Caco-2 (cell line): ENCODE measurements at regions of chr7 and their contacts with region 1.

Region 1: DNA sequence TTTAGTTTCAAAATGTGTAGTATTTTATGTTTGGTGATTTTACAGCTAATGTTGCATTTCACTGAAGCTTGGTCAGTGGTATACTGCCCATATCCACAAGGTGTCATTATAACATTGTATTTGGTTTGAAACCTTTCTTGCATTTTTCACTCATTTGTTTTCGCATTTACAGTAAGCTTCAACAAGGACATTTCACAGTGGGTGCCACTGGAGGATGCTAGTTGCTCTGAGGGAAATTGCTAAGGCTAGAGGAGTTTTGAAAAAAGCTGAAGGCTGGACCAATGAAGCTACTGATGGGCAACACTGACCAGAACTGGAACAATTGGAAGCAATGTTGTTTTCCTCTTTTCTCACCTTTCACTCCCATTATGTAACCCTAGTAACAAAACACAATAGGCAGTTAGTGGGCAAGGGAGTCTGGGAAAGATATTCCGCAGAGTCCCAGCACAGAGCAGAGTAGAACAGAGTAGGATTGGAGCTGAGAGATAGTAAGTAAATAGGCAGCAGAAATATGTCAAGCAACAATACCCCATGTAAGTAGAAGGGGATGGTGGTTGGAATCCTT is 23.6 kb upstream of the SRI start:
- DNase-seq: peak in 1 of 2 experiments; percentile 36
- H3K4me3 ChIP-seq: no peak overlapping the region
- H3K4me3 Mint-ChIP-seq: no peak overlapping the region
- H3K27ac Mint-ChIP-seq: no peak overlapping the region
- H3K4me1 ChIP-seq: no peaks in the 10 kb centered on the region
- H3K4me1 Mint-ChIP-seq: no peaks in the 10 kb centered on the region
- H3K27me3 ChIP-seq: no peaks in the 10 kb centered on the region
- H3K27me3 Mint-ChIP-seq: peaks cover 5% of the 10 kb centered on the region
- CTCF ChIP-seq: peak; percentile 68 to 81

Region 2: GRCh38 chr7:88306590-88307048 is 63.2 kb after region 1 on chr7 and contains the start of gene STEAP4:
- CTCF ChIA-PET with region 1: no interaction called
- POLR2A ChIA-PET with region 1: no interaction called
- intact Hi-C with region 1: loop called (anchors 2 kb)
- DNase-seq: peak; percentile 62 to 65
- H3K4me3 ChIP-seq: peak within 1 kb of the TSS; percentile 34
- H3K4me3 Mint-ChIP-seq: peak within 1 kb of the TSS; percentile 84
- H3K27ac Mint-ChIP-seq: no peak within 1 kb of the TSS
- H3K4me1 ChIP-seq: peaks cover 12% of the 10 kb centered on the region; the same call in 1 of the 2 replicates
- H3K4me1 Mint-ChIP-seq: no peaks in the 10 kb centered on the region
- H3K27me3 ChIP-seq: no peaks in the 10 kb centered on the region
- H3K27me3 Mint-ChIP-seq: peaks cover 2% of the 10 kb centered on the region
- CTCF ChIP-seq: no peak
- total RNA-seq, gene STEAP4: 0.05 TPM in 1 of 2 replicates, not detected in the other

Region 3: GRCh38 chr7:88357781-88358525 is 114.5 kb after region 1 on chr7:
- CTCF ChIA-PET with region 1: interaction called, 24 read pairs
- POLR2A ChIA-PET with region 1: no interaction called
- intact Hi-C with region 1: loop called (anchors 1 kb)
- DNase-seq: peak in 1 of 2 experiments; percentile 32
- H3K4me3 ChIP-seq: no peak overlapping the region
- H3K4me3 Mint-ChIP-seq: peak overlapping the region; percentile 15
- H3K27ac Mint-ChIP-seq: no peak overlapping the region
- H3K4me1 ChIP-seq: peaks cover 14% of the 10 kb centered on the region
- H3K4me1 Mint-ChIP-seq: peaks cover 11% of the 10 kb centered on the region
- H3K27me3 ChIP-seq: no peaks in the 10 kb centered on the region; the same call in 1 of the 2 replicates
- H3K27me3 Mint-ChIP-seq: peaks cover 5% of the 10 kb centered on the region
- CTCF ChIP-seq: peak; percentile 56 to 71

Region 4: DNA sequence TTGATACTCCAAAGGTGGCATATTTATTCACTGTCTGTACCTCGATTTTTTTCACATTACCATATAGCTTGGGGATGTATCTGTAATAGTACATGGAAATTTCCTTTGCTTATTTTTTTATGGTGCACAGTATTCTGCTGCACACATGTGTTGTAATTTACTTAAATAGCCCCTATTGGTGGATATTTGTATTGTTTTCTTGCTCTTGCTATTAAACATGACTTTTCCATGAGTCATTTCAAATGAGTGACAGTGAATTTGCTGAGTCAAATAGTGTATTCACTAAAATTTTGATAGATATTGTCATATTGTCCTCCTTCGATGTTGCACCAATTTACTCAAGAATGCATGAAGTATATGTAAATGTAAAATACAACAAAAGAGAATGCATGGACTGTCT is 186.0 kb after region 1 on chr7:
- CTCF ChIA-PET with region 1: no interaction called
- POLR2A ChIA-PET with region 1: no interaction called
- intact Hi-C with region 1: no loop called
- DNase-seq: no peak
- H3K4me3 ChIP-seq: no peak overlapping the region
- H3K4me3 Mint-ChIP-seq: no peak overlapping the region
- H3K27ac Mint-ChIP-seq: no peak overlapping the region
- H3K4me1 ChIP-seq: no peaks in the 10 kb centered on the region
- H3K4me1 Mint-ChIP-seq: no peaks in the 10 kb centered on the region
- H3K27me3 ChIP-seq: no peaks in the 10 kb centered on the region
- H3K27me3 Mint-ChIP-seq: peaks cover 5% of the 10 kb centered on the region
- CTCF ChIP-seq: no peak

Region 5: DNA sequence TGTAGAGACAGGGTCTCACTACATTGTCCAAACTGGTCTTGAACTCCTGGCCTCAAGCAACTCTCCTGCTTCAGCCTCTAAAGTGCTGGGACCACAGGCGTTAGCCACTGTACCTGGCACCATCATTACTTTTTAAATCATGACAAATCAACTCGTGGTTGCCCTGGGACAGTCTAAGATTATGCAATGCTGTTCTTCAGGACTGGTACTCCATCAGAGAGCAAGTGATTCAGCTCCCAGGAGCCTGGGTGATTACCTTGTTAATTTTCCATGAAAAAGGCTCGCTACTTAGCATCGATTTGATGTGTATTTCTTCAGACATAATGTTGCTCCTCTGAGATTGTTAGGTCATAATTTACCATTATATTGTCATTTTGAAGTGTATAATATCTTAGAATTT is 222.2 kb after region 1 on chr7:
- CTCF ChIA-PET with region 1: no interaction called
- POLR2A ChIA-PET with region 1: no interaction called
- intact Hi-C with region 1: loop called (anchors 10 kb)
- DNase-seq: no peak
- H3K4me3 ChIP-seq: no peak overlapping the region
- H3K4me3 Mint-ChIP-seq: no peak overlapping the region
- H3K27ac Mint-ChIP-seq: no peak overlapping the region
- H3K4me1 ChIP-seq: no peaks in the 10 kb centered on the region
- H3K4me1 Mint-ChIP-seq: peaks cover 7% of the 10 kb centered on the region
- H3K27me3 ChIP-seq: no peaks in the 10 kb centered on the region
- H3K27me3 Mint-ChIP-seq: peaks cover 2% of the 10 kb centered on the region
- CTCF ChIP-seq: no peak

Region 6: GRCh38 chr7:88835147-88835728 is 591.8 kb after region 1 on chr7:
- CTCF ChIA-PET with region 1: interaction called, 18 read pairs
- POLR2A ChIA-PET with region 1: no interaction called
- intact Hi-C with region 1: loop called (anchors 1 kb)
- DNase-seq: peak in 1 of 2 experiments; percentile 59
- H3K4me3 ChIP-seq: no peak overlapping the region
- H3K4me3 Mint-ChIP-seq: no peak overlapping the region
- H3K27ac Mint-ChIP-seq: no peak overlapping the region
- H3K4me1 ChIP-seq: no peaks in the 10 kb centered on the region
- H3K4me1 Mint-ChIP-seq: no peaks in the 10 kb centered on the region
- H3K27me3 ChIP-seq: no peaks in the 10 kb centered on the region
- H3K27me3 Mint-ChIP-seq: no peaks in the 10 kb centered on the region
- CTCF ChIP-seq: peak; percentile 53 to 55